G401 (cell line): ENCODE measurements at regions of chr7 and their contacts with region 1.

Region 1: GRCh38 chr7:43318188-43318770 is 205.8 kb downstream of the HECW1 start:
- DNase-seq: no peak

Region 2: DNA sequence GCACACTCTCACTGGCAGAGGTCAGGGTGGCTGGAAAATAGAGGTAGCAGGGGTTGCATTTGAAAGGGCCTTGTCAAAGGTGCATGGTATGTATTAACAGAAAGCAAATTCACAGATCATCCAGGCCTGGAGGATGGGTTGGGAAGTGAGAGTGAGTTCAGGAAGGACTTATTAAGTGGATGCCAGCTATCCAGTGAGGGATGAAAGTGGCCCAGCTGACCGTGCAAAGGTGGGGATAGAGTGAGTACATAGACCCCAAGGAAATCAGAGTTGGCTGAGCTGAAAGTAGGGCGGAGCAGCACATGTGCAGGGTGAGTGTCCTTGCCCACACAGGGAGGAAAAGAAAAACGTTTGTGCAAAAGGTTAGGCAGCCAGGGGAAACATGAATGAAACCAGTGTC is 147.7 kb before region 1 on chr7:
- in situ Hi-C with region 1: no loop called
- DNase-seq: no peak

Region 3: GRCh38 chr7:43405948-43406347 is 87.7 kb after region 1 on chr7:
- in situ Hi-C with region 1: loop called (anchors 5 kb)
- DNase-seq: no peak

Region 4: DNA sequence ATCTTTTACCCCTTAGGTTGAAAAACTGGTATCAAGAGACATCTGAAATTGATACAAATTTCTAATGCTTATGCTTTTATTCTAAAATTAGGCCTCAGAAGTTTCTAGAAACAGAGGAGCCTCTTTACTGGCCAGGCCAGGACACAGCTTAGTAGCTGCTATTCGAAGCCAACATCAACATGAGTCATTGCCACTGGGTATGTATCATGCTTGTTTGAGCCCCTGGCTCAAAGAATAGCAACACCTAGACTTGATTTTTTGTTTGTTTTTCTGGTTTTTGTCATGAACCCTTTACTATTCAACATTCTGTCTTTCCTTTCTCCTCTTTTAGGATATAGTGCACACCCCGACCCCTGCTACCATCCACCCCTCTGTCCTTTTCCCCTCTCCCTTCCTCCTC is 173.7 kb after region 1 on chr7:
- in situ Hi-C with region 1: no loop called
- DNase-seq: no peak